OCI-LY7 (cell line): ENCODE measurements at regions of chr1 and their contacts with region 1.

Region 1: GRCh38 chr1:151790071-151790940 is at the start of gene TDRKH:
- DNase-seq: peak; percentile 99
- H3K4me3 ChIP-seq: peak within 1 kb of the TSS; percentile 73
- H3K27ac ChIP-seq: no peak within 1 kb of the TSS
- H3K4me1 ChIP-seq: peaks cover 15% of the 10 kb centered on the region
- CTCF ChIP-seq: peak; percentile 65
- total RNA-seq, gene TDRKH: 7.2 and 10.2 TPM in 2 replicates

Region 2: GRCh38 chr1:150730130-150730721 is 1060.1 kb before region 1 on chr1:
- CTCF ChIA-PET with region 1: no interaction called
- POLR2A ChIA-PET with region 1: no interaction called
- intact Hi-C with region 1: no loop called
- DNase-seq: no peak
- H3K4me3 ChIP-seq: no peak overlapping the region
- H3K27ac ChIP-seq: no peak overlapping the region
- H3K4me1 ChIP-seq: no peaks in the 10 kb centered on the region
- CTCF ChIP-seq: no peak

Region 3: DNA sequence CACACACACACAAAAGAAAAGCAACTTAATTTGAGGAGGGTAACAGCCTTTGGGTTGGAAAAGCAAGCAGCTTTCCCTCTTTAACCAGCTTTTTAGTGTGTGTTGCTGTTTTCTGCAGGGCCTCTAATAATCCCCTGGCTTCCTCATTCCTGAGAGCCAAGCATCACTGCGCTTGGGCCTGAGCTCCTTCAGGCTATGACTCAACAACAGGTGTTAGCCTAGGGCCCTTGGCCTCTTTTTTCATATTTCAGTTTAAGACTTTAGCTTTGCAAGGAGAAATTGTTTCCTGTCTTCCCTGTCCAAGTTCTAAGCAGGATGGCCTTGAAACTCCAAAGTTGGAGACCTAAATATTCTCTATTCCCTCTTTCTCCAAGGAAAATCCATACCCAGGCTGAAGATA is 204.7 kb before region 1 on chr1:
- CTCF ChIA-PET with region 1: no interaction called
- POLR2A ChIA-PET with region 1: no interaction called
- intact Hi-C with region 1: no loop called
- DNase-seq: peak; percentile 28
- H3K4me3 ChIP-seq: no peak overlapping the region
- H3K27ac ChIP-seq: no peak overlapping the region
- H3K4me1 ChIP-seq: no peaks in the 10 kb centered on the region
- CTCF ChIP-seq: no peak

Region 4: DNA sequence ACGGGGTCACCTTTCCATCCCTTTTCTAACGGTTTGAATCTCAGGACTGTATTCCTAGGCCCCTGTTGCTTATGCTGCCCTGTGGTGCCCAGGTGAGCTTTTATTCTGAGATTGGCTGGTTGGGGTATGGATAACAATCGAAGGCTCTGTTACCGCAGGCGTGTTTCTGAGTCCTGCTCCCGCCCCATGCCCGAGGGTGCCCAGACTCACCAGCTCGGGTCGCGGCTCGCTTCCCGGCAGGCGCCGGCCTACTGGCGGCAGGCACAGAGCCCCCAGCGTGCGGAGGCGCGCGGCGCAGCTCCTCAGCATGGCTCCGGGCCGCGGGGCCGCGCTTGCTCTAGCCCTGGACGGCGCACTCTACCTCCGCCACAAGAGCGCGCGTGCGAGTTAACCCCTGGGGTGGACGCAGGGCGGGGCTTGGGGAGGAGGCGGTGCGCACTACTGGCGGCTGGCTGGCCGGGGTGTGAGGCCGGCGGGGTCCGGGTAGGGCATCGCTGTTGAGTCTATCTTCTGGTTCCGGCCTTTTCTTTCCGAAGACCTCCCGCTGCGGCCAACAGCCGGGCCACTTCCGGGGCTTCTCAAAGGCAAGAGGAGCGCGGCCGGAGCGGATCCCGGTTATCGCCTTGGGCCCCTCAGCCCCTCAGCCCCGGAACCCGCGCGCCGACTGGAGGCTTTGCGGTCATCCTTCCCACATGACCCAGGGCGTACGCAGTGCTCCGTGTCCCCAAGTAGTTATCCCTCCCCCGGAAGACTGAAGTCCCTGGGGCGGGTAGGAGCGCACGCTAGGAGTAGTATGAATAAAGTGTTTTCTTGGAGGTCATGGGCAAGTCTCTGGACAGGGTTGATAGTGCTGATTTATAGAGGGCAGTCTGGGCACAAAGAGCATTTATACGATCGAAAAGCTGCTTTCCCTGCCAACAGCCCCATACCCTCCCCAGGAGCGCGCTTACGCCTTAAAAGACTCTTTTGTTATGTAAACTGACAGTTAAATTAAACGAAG is 119.1 kb after region 1 on chr1 and contains the start of gene THEM4:
- CTCF ChIA-PET with region 1: no interaction called
- POLR2A ChIA-PET with region 1: no interaction called
- intact Hi-C with region 1: loop called (anchors 10 kb)
- DNase-seq: peak; percentile 93
- H3K4me3 ChIP-seq: peak within 1 kb of the TSS; percentile 70
- H3K27ac ChIP-seq: peak within 1 kb of the TSS; percentile 26
- H3K4me1 ChIP-seq: peaks cover 11% of the 10 kb centered on the region
- CTCF ChIP-seq: peak; percentile 47
- total RNA-seq, gene THEM4: 7.2 TPM in 2 replicates